ENCODE measurements at regions of chr2 and their contacts with region 1.

Region 1: GRCh38 chr2:190468814-190469569 is 60.8 kb downstream of the MFSD6 start:
- DNase-seq: peak; percentile 31
- H3K4me3 ChIP-seq: peak overlapping the region; percentile 33
- H3K27ac ChIP-seq: peak overlapping the region; percentile 65
- H3K4me1 ChIP-seq: peaks cover 65% of the 10 kb centered on the region
- CTCF ChIP-seq: no peak

Region 2: GRCh38 chr2:190408538-190409271 is 60.3 kb before region 1 on chr2:
- CTCF ChIA-PET with region 1: no interaction called
- POLR2A ChIA-PET with region 1: interaction called, 5 read pairs
- intact Hi-C with region 1: loop called (anchors 2 kb)
- DNase-seq: peak; percentile 65
- H3K4me3 ChIP-seq: peak overlapping the region; percentile 84
- H3K27ac ChIP-seq: peak overlapping the region; percentile 46
- H3K4me1 ChIP-seq: peaks cover 16% of the 10 kb centered on the region
- CTCF ChIP-seq: no peak

Region 3: DNA sequence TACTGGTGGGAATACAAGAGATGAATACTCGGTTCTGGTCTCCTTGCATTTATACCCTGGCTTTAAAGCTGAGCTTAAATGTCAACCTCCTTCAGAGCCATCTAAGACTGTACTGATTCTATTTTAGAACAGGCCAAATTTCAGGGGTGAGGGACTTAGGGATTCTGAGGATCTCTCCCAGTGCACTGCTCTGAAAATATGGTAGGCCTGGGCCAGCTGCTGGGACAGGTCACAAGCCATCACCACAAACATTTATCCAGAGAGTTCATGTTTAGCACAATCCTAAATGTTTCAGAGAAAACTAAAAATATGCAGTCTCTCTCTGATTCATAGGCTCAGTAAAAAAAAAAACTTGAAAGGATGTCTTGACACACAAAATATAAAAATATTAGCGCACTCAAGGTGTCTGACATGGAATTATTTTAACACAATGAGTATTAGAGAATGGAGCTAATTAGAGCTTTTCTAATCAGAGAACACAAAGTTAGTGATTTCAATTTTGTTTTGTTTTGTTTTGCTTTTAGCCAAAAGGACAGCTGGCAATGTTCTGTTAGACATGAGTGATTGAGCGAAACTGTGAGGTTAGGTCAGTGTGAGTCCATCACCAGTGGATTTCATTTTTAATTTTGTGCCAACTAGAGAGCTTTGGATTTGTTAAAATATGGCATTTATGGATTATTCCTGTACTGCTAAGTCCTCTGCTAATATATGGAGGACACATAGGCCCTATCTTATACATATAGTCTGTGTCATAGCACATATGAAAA is 22.1 kb before region 1 on chr2:
- CTCF ChIA-PET with region 1: no interaction called
- POLR2A ChIA-PET with region 1: interaction called, 11 read pairs
- intact Hi-C with region 1: no loop called
- DNase-seq: no peak
- H3K4me3 ChIP-seq: no peak overlapping the region
- H3K27ac ChIP-seq: no peak overlapping the region
- H3K4me1 ChIP-seq: peaks cover 6% of the 10 kb centered on the region
- CTCF ChIP-seq: no peak

Region 4: GRCh38 chr2:190482451-190482850 is 13.5 kb after region 1 on chr2:
- CTCF ChIA-PET with region 1: no interaction called
- POLR2A ChIA-PET with region 1: interaction called, 15 read pairs
- intact Hi-C with region 1: no loop called
- DNase-seq: no peak
- H3K4me3 ChIP-seq: no peak overlapping the region
- H3K27ac ChIP-seq: no peak overlapping the region
- H3K4me1 ChIP-seq: no peaks in the 10 kb centered on the region
- CTCF ChIP-seq: no peak

Measured in OCI-LY7 (cell line).